ENCODE measurements at regions of chr11 and their contacts with region 1.

Region 1: GRCh38 chr11:75388386-75389275 is 10.7 kb upstream of the RPS3 start:
- DNase-seq: peak in 1 of 2 donors; percentile 45
- ATAC-seq: peak; percentile 69 to 81
- H3K4me3 ChIP-seq: no peak overlapping the region
- H3K27ac ChIP-seq: peak overlapping the region in 1 of 4 donors; percentile 39
- H3K4me1 ChIP-seq: peaks cover 0 to 6% of the 10 kb centered on the region in 2 donors
- H3K27me3 ChIP-seq: no peaks in the 10 kb centered on the region
- CTCF ChIP-seq: peak; percentile 69 to 85 (median 76)
- POLR2A ChIP-seq: no peak

Region 2: GRCh38 chr11:75280227-75280701 is 108.4 kb before region 1 on chr11:
- in situ Hi-C with region 1: loop called (anchors 5 kb)
- intact Hi-C with region 1: loop called (anchors 1 kb)
- DNase-seq: peak; percentile 32 to 57
- ATAC-seq: peak; percentile 69 to 71
- H3K4me3 ChIP-seq: no peak overlapping the region
- H3K27ac ChIP-seq: no peak overlapping the region
- H3K4me1 ChIP-seq: no peaks in the 10 kb centered on the region
- H3K27me3 ChIP-seq: no peaks in the 10 kb centered on the region
- CTCF ChIP-seq: peak; percentile 85 to 97 (median 95)
- POLR2A ChIP-seq: no peak

Region 3: GRCh38 chr11:75328426-75329277 is 60.0 kb before region 1 on chr11:
- in situ Hi-C with region 1: loop called in 1 of 4 experiments (anchors 5 kb)
- intact Hi-C with region 1: loop called (anchors 1 kb)
- DNase-seq: no peak
- ATAC-seq: peak; percentile 74 to 79
- H3K4me3 ChIP-seq: no peak overlapping the region
- H3K27ac ChIP-seq: peak overlapping the region in 1 of 4 donors; percentile 18
- H3K4me1 ChIP-seq: peaks cover 0 to 6% of the 10 kb centered on the region in 2 donors
- H3K27me3 ChIP-seq: no peaks in the 10 kb centered on the region
- CTCF ChIP-seq: peak; percentile 17 to 55 (median 50)
- POLR2A ChIP-seq: no peak

Region 4: GRCh38 chr11:75337195-75337654 is 51.4 kb before region 1 on chr11:
- in situ Hi-C with region 1: loop called in 1 of 4 experiments (anchors 5 kb)
- intact Hi-C with region 1: no loop called
- DNase-seq: peak; percentile 41
- ATAC-seq: no peak
- H3K4me3 ChIP-seq: no peak overlapping the region
- H3K27ac ChIP-seq: peak overlapping the region in 2 of 4 donors; percentile 28 to 69
- H3K4me1 ChIP-seq: peaks cover 41 to 61% of the 10 kb centered on the region in 2 donors
- H3K27me3 ChIP-seq: no peaks in the 10 kb centered on the region
- CTCF ChIP-seq: no peak
- POLR2A ChIP-seq: no peak

Region 5: GRCh38 chr11:75351791-75352587 is 36.6 kb before region 1 on chr11:
- in situ Hi-C with region 1: no loop called
- intact Hi-C with region 1: loop called (anchors 5 kb)
- DNase-seq: peak in 1 of 2 donors; percentile 41
- ATAC-seq: peak; percentile 17 to 23
- H3K4me3 ChIP-seq: peak overlapping the region; percentile 67 to 74 (median 72)
- H3K27ac ChIP-seq: peak overlapping the region; percentile 80 to 86 (median 86)
- H3K4me1 ChIP-seq: peaks cover 32 to 35% of the 10 kb centered on the region in 2 donors
- H3K27me3 ChIP-seq: no peaks in the 10 kb centered on the region
- CTCF ChIP-seq: no peak
- POLR2A ChIP-seq: no peak

Region 6: DNA sequence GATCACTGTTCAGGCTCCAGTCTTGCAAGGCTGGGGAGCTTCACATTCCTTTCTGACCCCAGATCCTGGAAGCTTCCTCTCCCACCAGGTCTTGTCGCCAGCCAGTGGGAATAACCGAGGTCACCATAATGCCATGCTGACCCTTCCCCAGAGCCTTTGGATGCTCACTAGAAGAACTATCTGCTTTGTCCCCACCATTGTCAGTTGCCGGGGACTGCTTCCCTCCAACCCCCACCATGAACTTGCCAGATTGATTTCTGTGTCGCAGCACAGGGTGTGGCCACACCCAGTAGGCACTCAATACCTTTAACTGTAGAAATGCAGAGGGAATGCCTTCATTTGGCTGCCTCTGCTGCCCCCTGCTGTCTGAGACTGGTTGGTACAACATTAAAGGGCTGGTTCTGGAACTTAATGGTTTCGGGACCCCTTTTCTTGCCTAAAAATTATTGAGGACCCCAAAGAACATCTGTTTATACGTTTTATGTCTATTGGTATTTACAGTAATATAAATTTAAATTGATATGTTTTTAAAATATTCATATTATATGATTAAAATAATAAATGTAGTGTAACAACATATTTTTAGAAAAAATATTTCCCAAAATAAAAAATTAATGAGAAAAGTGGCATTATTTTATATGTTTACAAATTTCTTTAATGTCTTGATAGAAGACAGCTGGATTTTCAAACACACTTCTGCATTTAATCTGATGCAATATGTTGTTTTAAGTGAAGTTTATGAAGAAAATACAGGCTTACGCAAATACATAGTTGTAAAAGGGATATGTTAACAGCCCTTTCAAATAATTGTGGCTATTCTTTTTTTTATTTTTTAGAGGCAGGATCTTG is 143.8 kb after region 1 on chr11:
- in situ Hi-C with region 1: no loop called
- intact Hi-C with region 1: loop called (anchors 1 kb)
- DNase-seq: peak in 1 of 2 donors; percentile 64
- ATAC-seq: peak; percentile 46 to 83
- H3K4me3 ChIP-seq: no peak overlapping the region
- H3K27ac ChIP-seq: no peak overlapping the region
- H3K4me1 ChIP-seq: no peaks in the 10 kb centered on the region
- H3K27me3 ChIP-seq: no peaks in the 10 kb centered on the region
- CTCF ChIP-seq: peak; percentile 88 to 93 (median 92)
- POLR2A ChIP-seq: no peak